CD8-positive, alpha-beta T cell (primary cell): ENCODE measurements at regions of chr13 and their contacts with region 1.

Region 1: GRCh38 chr13:40992678-40993518 is 26.2 kb downstream of the ELF1 start:
- DNase-seq: peak in 2 of 9 experiments; percentile 47 to 66
- ATAC-seq: peak; percentile 52
- H3K4me3 ChIP-seq: no peak overlapping the region
- H3K4me3 Mint-ChIP-seq: peak overlapping the region; percentile 43
- H3K27ac ChIP-seq: peak overlapping the region in 1 of 2 experiments; percentile 17
- H3K27ac Mint-ChIP-seq: peak overlapping the region; percentile 86
- H3K4me1 ChIP-seq: peaks cover 88% of the 10 kb centered on the region
- H3K4me1 Mint-ChIP-seq: peaks cover 83% of the 10 kb centered on the region
- H3K27me3 ChIP-seq: no peaks in the 10 kb centered on the region
- H3K27me3 Mint-ChIP-seq: no peaks in the 10 kb centered on the region
- CTCF ChIP-seq: peak; percentile 47

Region 2: DNA sequence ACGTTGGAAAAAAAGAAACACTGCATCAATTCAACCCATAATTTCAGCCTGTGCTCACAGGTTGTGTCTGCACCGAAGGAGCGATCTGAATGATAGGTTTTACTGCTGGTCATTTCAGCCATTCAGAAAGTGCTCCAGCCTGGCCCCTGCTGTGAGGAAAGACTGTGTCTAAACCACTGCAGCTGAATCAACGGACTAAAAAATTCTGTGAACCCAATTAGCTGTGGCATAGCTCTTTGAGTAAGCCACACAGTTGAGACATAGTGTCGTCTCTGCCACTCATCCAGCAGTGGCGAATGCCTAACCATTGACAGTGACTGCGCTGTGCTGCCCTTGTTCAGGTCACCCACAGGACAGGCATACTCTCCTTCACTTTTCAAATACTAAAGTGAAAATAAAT is 1157.6 kb before region 1 on chr13:
- CTCF ChIA-PET with region 1: no interaction called
- POLR2A ChIA-PET with region 1: no interaction called
- intact Hi-C with region 1: no loop called
- DNase-seq: no peak
- ATAC-seq: no peak
- H3K4me3 ChIP-seq: no peak overlapping the region
- H3K4me3 Mint-ChIP-seq: no peak overlapping the region
- H3K27ac ChIP-seq: no peak overlapping the region
- H3K27ac Mint-ChIP-seq: no peak overlapping the region
- H3K4me1 ChIP-seq: no peaks in the 10 kb centered on the region
- H3K4me1 Mint-ChIP-seq: no peaks in the 10 kb centered on the region
- H3K27me3 ChIP-seq: no peaks in the 10 kb centered on the region
- H3K27me3 Mint-ChIP-seq: peaks cover 5% of the 10 kb centered on the region
- CTCF ChIP-seq: no peak

Region 3: DNA sequence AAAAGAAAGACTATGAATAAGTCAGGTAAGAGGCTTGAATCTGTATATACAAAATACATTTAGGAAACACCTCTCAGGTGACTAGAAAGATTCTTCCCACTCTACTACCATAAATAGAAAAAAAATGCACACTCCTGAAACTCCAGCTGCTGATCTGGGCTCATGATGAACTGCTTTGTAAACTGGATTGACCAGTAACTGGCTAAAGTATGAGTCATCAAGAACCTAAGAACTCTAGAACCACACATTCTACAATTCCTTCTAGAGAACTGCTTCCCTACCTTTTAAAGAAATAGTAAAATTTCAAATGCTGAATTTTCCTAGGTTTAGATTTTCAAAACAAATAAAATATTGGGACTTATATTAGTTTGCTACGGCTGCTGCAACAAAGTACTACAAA is 29.0 kb before region 1 on chr13:
- CTCF ChIA-PET with region 1: interaction called, 3 read pairs
- POLR2A ChIA-PET with region 1: no interaction called
- intact Hi-C with region 1: loop called in 1 of 2 experiments (anchors 5 kb)
- DNase-seq: no peak
- ATAC-seq: no peak
- H3K4me3 ChIP-seq: no peak overlapping the region
- H3K4me3 Mint-ChIP-seq: peak overlapping the region; percentile 5
- H3K27ac ChIP-seq: no peak overlapping the region
- H3K27ac Mint-ChIP-seq: peak overlapping the region; percentile 10
- H3K4me1 ChIP-seq: peaks cover 85% of the 10 kb centered on the region
- H3K4me1 Mint-ChIP-seq: peaks cover 89% of the 10 kb centered on the region
- H3K27me3 ChIP-seq: no peaks in the 10 kb centered on the region
- H3K27me3 Mint-ChIP-seq: no peaks in the 10 kb centered on the region
- CTCF ChIP-seq: no peak

Region 4: GRCh38 chr13:41085961-41086585 is 93.2 kb after region 1 on chr13:
- CTCF ChIA-PET with region 1: no interaction called
- POLR2A ChIA-PET with region 1: no interaction called
- intact Hi-C with region 1: no loop called
- DNase-seq: no peak
- ATAC-seq: no peak
- H3K4me3 ChIP-seq: no peak overlapping the region
- H3K4me3 Mint-ChIP-seq: no peak overlapping the region
- H3K27ac ChIP-seq: no peak overlapping the region
- H3K27ac Mint-ChIP-seq: peak overlapping the region; percentile 2
- H3K4me1 ChIP-seq: no peaks in the 10 kb centered on the region
- H3K4me1 Mint-ChIP-seq: peaks cover 5% of the 10 kb centered on the region
- H3K27me3 ChIP-seq: no peaks in the 10 kb centered on the region
- H3K27me3 Mint-ChIP-seq: no peaks in the 10 kb centered on the region
- CTCF ChIP-seq: no peak